HEK293 (cell line): ENCODE measurements at regions of chr7 and their contacts with region 1.

Region 1: GRCh38 chr7:95545078-95545498 is 51.2 kb downstream of the PDK4 start:
- H3K4me3 ChIP-seq: no peak overlapping the region
- H3K27ac ChIP-seq: no peak overlapping the region
- H3K4me1 ChIP-seq: peaks cover 11% of the 10 kb centered on the region
- CTCF ChIP-seq: no peak

Region 2: DNA sequence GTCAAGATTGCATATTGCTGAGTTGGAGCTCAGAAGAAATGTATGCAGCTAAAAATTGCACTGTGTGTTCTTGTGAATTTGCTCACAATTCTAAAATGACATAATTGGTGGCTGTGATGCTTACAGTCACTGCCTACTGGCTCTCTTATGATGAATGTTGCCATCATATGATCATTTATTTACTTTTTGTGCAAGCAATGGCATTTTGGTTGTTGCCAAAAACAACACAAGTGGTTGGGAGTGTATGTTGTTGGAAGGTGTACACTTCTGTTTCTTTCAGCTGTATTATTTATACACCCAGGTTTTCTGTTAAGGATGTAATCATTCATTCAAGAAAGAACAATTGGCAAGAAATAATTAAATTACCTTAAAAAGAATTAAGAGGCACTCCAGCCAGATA is 249.7 kb before region 1 on chr7:
- CTCF ChIA-PET with region 1: no interaction called
- POLR2A ChIA-PET with region 1: no interaction called
- H3K4me3 ChIP-seq: no peak overlapping the region
- H3K27ac ChIP-seq: no peak overlapping the region
- H3K4me1 ChIP-seq: no peaks in the 10 kb centered on the region
- CTCF ChIP-seq: no peak

Region 3: DNA sequence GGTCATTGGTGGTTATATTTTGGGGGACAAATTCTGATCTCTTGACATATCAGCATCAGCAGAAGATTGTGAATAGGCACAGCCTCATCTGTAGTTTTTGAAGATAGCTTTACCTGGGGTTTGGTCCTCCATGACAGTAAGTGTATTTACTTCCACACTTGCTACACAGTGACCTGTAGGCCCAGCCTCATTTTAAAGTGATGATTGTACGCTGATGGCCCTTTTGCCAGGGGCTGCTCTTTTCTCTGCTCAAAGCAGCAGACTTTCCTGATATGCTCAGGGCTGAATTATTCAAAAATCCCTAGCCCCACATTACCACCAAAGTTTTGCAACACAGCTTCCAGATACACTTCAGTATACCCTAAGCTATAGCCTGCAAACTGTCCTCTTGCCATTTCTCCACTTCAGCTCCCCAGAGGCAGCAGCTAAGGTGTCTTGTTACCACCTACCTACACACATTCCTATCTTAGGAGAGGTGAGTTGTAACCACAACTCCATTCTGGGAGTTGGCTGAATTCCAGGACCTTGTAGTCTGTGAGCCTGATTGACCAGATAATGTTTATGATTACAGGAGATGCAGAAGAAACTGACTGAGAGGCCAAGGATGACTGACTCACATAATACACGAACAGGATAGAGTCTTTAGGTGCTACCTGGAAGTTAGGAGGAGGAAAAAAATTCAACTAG is 53.3 kb before region 1 on chr7:
- CTCF ChIA-PET with region 1: no interaction called
- POLR2A ChIA-PET with region 1: no interaction called
- H3K4me3 ChIP-seq: no peak overlapping the region
- H3K27ac ChIP-seq: no peak overlapping the region
- H3K4me1 ChIP-seq: peaks cover 5% of the 10 kb centered on the region; the same call in 1 of the 2 replicates
- CTCF ChIP-seq: no peak

Region 4: DNA sequence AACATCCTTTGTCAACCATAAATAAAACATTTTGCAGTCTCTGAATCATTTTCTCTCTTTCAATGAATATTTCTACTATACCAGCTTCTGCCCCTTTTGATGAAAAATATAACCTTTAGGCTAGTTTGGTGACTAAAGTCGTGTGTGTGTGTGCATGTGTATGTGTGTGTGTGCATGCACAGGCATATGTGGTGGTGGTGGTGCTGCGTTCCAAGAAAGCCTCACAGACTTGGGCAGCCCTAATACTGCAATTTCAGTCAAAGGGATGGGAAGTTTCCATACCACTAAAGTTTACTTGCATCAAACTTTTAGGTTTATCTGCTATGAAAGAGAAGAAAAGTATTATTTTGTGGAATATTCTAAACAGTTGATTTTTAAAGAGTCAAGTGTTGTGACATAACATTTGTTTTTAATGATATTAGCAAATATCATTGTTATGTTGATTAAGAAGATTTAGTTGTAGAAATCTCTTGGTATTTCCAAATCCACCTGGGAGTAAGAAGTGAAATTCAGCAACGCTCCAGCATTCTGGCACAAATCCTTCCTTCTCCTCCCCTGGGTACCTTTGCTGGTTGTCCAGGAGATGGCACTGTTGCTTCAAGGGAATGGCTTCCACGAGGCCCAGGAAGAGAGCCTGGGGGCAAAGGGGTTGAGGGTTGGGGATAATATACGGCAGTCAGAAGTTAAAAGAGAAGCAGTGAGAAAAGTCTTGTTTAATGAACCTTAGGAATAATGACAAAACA is 17.9 kb before region 1 on chr7:
- CTCF ChIA-PET with region 1: interaction called, 87 read pairs
- POLR2A ChIA-PET with region 1: no interaction called
- H3K4me3 ChIP-seq: no peak overlapping the region
- H3K27ac ChIP-seq: no peak overlapping the region
- H3K4me1 ChIP-seq: no peaks in the 10 kb centered on the region
- CTCF ChIP-seq: peak; percentile 75

Region 5: GRCh38 chr7:95534796-95535195 is 10.3 kb before region 1 on chr7:
- CTCF ChIA-PET with region 1: interaction called, 87 read pairs
- POLR2A ChIA-PET with region 1: no interaction called
- H3K4me3 ChIP-seq: no peak overlapping the region
- H3K27ac ChIP-seq: no peak overlapping the region
- H3K4me1 ChIP-seq: no peaks in the 10 kb centered on the region
- CTCF ChIP-seq: no peak